ENCODE measurements at regions of chr11 and their contacts with region 1.

Region 1: GRCh38 chr11:117426269-117426685 is 98.6 kb downstream of the CEP164 start:
- H3K4me3 ChIP-seq: no peak overlapping the region
- H3K27ac ChIP-seq: no peak overlapping the region
- H3K4me1 ChIP-seq: no peaks in the 10 kb centered on the region
- CTCF ChIP-seq: peak; percentile 82

Region 2: DNA sequence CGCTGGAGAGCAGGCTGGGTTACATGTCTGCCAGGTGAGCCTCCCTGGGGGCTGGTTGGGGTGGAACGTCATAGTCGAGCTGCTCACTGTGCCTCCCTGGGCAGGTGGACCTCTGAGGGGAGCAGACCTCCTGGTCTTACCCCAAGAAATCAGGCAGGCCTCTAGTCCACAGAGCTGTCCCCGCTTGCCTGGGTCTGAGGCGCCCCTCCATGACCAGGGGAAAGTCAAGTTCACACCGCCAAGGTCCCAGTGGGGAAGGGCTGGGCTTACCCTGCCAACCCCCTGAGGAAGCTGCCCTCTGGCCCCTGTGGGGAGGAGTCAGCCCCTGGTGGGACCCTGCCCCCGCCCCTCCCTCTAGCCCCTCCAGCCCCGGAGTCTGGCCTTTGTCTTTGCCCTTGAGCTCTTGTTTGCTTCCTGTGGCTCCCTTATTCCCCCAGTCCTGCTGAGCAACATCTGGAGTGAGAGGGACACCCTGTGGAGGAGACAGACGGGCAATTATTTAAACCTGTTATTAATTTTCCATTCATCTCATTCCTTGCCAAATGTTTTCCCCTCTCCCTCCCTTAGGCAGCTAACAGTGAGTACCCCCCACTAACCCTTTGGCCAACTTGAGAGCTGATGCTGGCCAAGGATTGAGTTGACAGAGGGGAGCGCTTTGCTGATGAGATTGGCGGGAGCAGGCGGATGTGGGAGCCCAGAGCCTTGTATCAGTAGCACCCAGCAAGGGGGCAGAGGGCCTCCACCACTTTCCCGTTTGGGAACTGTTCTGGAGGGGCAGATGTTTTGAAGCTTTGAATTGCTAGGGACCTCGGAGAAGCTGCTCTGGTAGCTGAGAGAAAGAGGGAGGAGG is 15.2 kb before region 1 on chr11:
- CTCF ChIA-PET with region 1: interaction called, 36 read pairs
- POLR2A ChIA-PET with region 1: no interaction called
- H3K4me3 ChIP-seq: no peak overlapping the region
- H3K27ac ChIP-seq: no peak overlapping the region
- H3K4me1 ChIP-seq: no peaks in the 10 kb centered on the region
- CTCF ChIP-seq: no peak

Region 3: GRCh38 chr11:117453886-117454563 is 27.7 kb after region 1 on chr11:
- CTCF ChIA-PET with region 1: interaction called, 10 read pairs
- POLR2A ChIA-PET with region 1: no interaction called
- H3K4me3 ChIP-seq: no peak overlapping the region
- H3K27ac ChIP-seq: no peak overlapping the region
- H3K4me1 ChIP-seq: no peaks in the 10 kb centered on the region
- CTCF ChIP-seq: no peak

Region 4: GRCh38 chr11:117509543-117509942 is 83.3 kb after region 1 on chr11:
- CTCF ChIA-PET with region 1: interaction called, 12 read pairs
- POLR2A ChIA-PET with region 1: no interaction called
- H3K4me3 ChIP-seq: no peak overlapping the region
- H3K27ac ChIP-seq: no peak overlapping the region
- H3K4me1 ChIP-seq: no peaks in the 10 kb centered on the region
- CTCF ChIP-seq: no peak

Region 5: GRCh38 chr11:117817368-117818040 is 391.2 kb after region 1 on chr11:
- CTCF ChIA-PET with region 1: interaction called, 113 read pairs
- POLR2A ChIA-PET with region 1: no interaction called
- H3K4me3 ChIP-seq: no peak overlapping the region
- H3K27ac ChIP-seq: no peak overlapping the region
- H3K4me1 ChIP-seq: peaks cover 3% of the 10 kb centered on the region; the same call in 1 of the 2 replicates
- CTCF ChIP-seq: peak; percentile 83

Region 6: GRCh38 chr11:117979481-117980211 is 553.4 kb after region 1 on chr11:
- CTCF ChIA-PET with region 1: no interaction called
- POLR2A ChIA-PET with region 1: no interaction called
- H3K4me3 ChIP-seq: no peak overlapping the region
- H3K27ac ChIP-seq: no peak overlapping the region
- H3K4me1 ChIP-seq: no peaks in the 10 kb centered on the region
- CTCF ChIP-seq: no peak